ENCODE measurements at regions of chr20 and their contacts with region 1.

Region 1: DNA sequence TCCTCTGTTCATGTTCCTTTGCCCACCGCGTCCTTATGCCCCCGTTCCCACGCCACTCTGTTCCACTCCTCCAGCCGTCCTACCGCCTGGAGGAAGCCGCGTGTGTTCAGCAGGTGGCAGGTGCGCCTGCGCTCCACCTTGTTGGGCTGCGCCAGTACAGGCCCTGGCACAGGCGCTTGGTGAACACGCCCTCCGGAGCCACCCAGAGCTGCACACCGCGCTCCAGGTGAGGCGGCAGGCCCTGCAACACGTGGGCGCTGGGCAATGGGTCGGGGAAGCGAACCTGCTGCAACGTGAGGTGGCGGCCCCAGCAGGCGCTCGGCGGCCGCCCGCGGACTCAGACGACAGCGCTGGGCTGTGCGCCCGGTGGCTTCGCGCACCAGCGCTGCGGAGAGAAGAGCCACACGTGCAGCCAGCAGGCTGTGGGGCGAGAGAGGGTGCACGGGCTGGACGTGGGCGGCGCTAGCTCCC is 4.1 kb upstream of the FOXS1 start:
- DNase-seq: no peak
- H3K4me3 Mint-ChIP-seq: no peak overlapping the region
- H3K27ac Mint-ChIP-seq: no peak overlapping the region
- H3K4me1 Mint-ChIP-seq: no peaks in the 10 kb centered on the region
- H3K27me3 Mint-ChIP-seq: peaks cover 33% of the 10 kb centered on the region
- CTCF ChIP-seq: no peak

Region 2: DNA sequence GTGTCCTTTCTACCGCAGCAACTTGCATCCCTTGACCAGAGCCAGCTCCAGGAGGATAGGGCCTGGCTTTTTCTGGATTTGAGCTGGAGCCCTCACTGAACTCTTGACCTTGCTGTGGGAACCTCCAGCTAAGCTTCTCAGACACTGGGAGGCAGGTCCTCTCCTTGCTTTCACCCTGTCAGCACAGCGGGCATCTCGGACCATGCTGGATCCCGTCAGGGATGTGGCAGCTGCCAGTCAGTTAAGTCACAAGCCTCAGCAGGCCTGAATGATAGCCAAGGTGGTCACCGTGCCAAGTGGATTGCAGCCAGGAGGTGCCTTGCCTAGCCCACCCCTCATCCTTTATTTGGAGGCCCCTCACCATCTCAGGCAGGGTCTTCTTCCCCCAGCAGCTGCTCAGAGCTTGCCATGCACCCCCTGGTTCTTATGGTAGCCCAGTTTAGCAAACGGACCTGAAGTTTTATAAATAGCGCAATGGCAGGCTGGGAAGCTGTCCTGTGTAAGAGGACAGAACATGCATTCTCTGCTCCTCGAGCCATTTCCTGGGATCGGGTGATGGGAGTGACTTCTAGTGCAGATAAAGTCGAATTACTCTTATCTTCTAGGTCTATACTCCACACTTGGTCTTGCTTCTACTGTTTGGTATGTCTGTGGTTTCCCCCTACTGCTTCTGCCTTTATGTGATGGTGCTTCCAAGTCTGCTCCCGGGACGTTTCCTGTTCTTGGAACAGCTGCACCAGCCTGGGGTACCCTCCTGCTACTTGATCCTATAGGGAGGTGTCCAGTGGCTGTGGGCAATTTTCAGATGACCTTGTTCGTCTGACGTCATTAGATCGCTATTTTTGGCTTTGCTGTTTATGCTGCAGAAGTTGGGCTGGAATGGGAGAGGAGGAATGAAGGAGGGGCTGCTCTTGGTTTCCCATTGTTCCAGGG is 37.4 kb before region 1 on chr20:
- CTCF ChIA-PET with region 1: interaction called, 15 read pairs
- POLR2A ChIA-PET with region 1: no interaction called
- intact Hi-C with region 1: no loop called
- DNase-seq: no peak
- H3K4me3 Mint-ChIP-seq: no peak overlapping the region
- H3K27ac Mint-ChIP-seq: no peak overlapping the region
- H3K4me1 Mint-ChIP-seq: no peaks in the 10 kb centered on the region
- H3K27me3 Mint-ChIP-seq: no peaks in the 10 kb centered on the region
- CTCF ChIP-seq: no peak

Region 3: DNA sequence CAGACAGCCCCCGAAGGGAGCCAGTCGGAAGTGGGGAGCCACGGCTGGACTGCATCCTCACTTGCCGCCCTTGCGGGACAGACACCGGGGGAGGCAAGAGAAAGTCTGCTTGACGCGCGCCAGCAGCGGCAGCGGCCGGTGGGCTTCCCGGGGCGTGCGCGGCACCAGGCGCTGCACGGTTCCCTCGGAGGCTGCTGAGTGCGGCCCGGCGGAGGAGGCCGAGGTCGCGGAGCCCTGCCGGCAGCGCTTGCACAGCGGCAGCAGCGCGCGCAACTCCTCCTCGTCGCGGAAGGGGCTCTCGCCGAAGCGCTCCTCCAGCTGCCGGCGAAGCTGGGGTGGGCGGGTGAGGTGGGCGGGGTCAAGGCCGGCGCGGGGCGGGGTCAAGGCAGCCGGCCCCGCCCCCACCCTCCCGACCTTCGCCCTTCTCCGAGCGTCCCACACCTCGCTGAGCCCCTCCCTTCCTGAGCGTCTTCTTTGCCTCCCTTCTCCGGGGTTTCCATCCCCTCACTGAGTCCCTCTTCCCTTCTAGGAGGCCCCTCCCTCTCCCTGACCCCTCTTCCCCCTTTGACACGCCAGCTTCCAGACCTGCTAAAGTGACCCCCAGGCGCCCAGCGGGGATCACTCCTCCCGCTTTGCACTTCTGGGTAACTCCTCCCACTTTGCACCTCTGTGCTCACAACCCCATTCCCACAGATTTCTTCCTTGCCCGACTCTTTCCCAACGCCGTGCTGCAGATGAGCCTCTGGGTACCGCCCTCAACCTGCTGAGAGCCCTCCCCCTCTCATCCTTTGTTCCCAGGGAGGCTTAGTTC is 12.1 kb after region 1 on chr20:
- CTCF ChIA-PET with region 1: interaction called, 49 read pairs
- POLR2A ChIA-PET with region 1: interaction called, 3 read pairs
- intact Hi-C with region 1: no loop called
- DNase-seq: no peak
- H3K4me3 Mint-ChIP-seq: peak overlapping the region; percentile 54
- H3K27ac Mint-ChIP-seq: no peak overlapping the region
- H3K4me1 Mint-ChIP-seq: peaks cover 5% of the 10 kb centered on the region
- H3K27me3 Mint-ChIP-seq: peaks cover 40% of the 10 kb centered on the region
- CTCF ChIP-seq: no peak

Region 4: GRCh38 chr20:31943052-31943471 is 93.6 kb after region 1 on chr20:
- CTCF ChIA-PET with region 1: interaction called, 32 read pairs
- POLR2A ChIA-PET with region 1: no interaction called
- intact Hi-C with region 1: no loop called
- DNase-seq: no peak
- H3K4me3 Mint-ChIP-seq: no peak overlapping the region
- H3K27ac Mint-ChIP-seq: no peak overlapping the region
- H3K4me1 Mint-ChIP-seq: no peaks in the 10 kb centered on the region
- H3K27me3 Mint-ChIP-seq: no peaks in the 10 kb centered on the region
- CTCF ChIP-seq: no peak

Region 5: DNA sequence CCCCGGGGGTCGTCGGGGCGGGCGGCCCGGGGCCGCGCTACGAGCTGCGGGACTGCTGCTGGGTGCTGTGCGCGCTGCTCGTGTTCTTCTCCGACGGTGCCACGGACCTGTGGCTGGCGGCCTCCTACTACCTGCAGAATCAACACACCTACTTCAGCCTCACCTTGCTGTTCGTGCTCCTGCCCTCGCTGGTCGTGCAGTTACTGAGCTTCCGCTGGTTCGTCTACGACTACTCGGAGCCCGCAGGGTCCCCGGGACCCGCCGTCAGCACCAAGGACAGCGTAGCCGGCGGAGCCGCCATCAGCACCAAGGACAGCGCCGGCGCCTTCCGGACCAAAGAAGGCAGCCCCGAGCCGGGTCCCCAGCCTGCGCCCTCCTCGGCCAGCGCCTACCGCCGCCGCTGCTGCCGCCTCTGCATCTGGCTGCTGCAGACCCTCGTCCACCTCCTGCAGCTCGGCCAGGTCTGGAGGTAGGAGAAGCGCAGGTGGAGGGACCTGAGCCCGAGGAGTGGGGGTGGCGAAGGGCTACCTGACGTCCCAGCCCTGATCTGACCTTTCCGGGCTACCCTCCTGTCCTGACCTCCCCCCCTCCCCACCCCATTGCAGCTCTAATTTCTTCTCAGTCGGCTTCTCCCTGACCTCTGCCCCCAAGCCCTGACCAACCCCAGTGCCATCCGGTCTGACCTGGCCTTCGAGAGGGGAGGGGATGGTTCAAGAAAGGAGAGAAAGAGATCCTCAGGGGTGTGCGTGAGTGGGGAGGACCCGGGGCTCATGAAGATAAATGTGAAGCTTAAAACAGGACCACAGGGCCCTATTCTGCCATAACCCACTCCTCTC is 119.0 kb after region 1 on chr20:
- CTCF ChIA-PET with region 1: interaction called, 14 read pairs
- POLR2A ChIA-PET with region 1: no interaction called
- intact Hi-C with region 1: no loop called
- DNase-seq: peak; percentile 51
- H3K4me3 Mint-ChIP-seq: no peak overlapping the region
- H3K27ac Mint-ChIP-seq: no peak overlapping the region
- H3K4me1 Mint-ChIP-seq: no peaks in the 10 kb centered on the region
- H3K27me3 Mint-ChIP-seq: peaks cover 95% of the 10 kb centered on the region
- CTCF ChIP-seq: no peak

Region 6: GRCh38 chr20:31996996-31997395 is 147.5 kb after region 1 on chr20:
- CTCF ChIA-PET with region 1: no interaction called
- POLR2A ChIA-PET with region 1: no interaction called
- intact Hi-C with region 1: no loop called
- DNase-seq: no peak
- H3K4me3 Mint-ChIP-seq: no peak overlapping the region
- H3K27ac Mint-ChIP-seq: no peak overlapping the region
- H3K4me1 Mint-ChIP-seq: no peaks in the 10 kb centered on the region
- H3K27me3 Mint-ChIP-seq: peaks cover 69% of the 10 kb centered on the region
- CTCF ChIP-seq: no peak

Region 7: GRCh38 chr20:32091888-32092346 is 242.4 kb after region 1 on chr20:
- CTCF ChIA-PET with region 1: interaction called, 52 read pairs
- POLR2A ChIA-PET with region 1: interaction called, 6 read pairs
- intact Hi-C with region 1: loop called (anchors 1 kb)
- DNase-seq: peak; percentile 77
- H3K4me3 Mint-ChIP-seq: no peak overlapping the region
- H3K27ac Mint-ChIP-seq: no peak overlapping the region
- H3K4me1 Mint-ChIP-seq: no peaks in the 10 kb centered on the region
- H3K27me3 Mint-ChIP-seq: peaks cover 40% of the 10 kb centered on the region
- CTCF ChIP-seq: peak; percentile 97